ENCODE measurements at regions of chr4 and their contacts with region 1.

Region 1: DNA sequence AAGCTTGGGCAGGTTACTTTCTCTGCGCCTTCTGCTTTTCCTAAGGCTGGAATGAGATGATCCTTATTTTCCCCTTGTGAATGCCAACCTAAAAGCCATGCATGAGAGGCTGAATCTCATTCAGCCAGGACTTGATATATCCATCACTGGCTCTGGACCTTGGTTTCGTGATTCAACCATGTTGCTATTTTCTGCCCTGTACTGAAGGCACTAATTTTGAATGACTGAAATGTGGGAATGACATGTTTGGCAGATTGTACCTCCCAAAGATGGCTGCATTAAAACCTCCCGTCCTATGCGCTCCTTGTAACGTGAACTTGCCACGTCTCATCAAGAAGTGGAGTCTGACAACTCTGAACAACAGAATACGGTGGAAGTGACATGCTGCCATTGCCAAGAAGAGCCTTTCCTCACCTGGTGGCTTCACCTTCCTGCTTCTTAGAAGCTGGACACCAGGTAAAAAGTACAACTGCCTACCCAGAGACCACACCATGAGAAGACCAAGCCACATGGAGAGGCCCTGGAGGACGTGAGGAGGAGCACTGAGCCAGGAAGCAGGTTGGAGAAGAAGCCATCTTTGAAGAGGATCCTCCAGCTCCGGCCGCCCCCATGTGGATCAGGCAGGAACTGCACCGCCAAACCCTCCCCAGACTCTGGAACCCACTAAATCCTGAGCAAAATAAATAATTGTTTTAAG is 174.5 kb downstream of the NSUN7 start:
- DNase-seq: peak in 1 of 2 donors; percentile 89
- H3K4me3 ChIP-seq: no peak overlapping the region
- CTCF ChIP-seq: peak in 1 of 3 donors; percentile 41
- POLR2A ChIP-seq: no peak

Region 2: GRCh38 chr4:39668887-39669286 is 1255.4 kb before region 1 on chr4:
- intact Hi-C with region 1: no loop called
- DNase-seq: no peak
- H3K4me3 ChIP-seq: no peak overlapping the region
- CTCF ChIP-seq: no peak
- POLR2A ChIP-seq: no peak

Region 3: DNA sequence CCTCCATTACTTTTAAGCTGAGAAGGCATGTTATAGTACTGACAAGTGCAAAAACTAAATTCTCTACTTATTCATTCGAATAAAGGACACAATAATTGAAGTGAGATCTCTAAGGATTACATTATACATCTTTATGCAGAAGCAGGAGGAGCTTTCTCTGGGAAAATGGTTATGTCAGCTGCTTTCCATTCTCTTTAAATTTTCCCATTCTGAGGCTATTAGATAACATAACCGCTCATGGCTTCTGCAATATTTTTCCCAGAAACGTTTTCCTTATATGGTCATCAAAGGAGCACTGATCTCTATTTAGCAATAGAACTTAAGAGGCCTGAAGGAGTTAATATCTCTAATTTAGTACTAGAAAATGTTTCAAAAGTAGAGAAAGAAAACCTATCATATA is 47.1 kb after region 1 on chr4:
- intact Hi-C with region 1: loop called (anchors 5 kb)
- DNase-seq: no peak
- H3K4me3 ChIP-seq: no peak overlapping the region
- CTCF ChIP-seq: no peak
- POLR2A ChIP-seq: no peak

Region 4: GRCh38 chr4:41214136-41214824 is 290.0 kb after region 1 on chr4 and contains the start of gene APBB2:
- intact Hi-C with region 1: loop called (anchors 5 kb)
- DNase-seq: peak; percentile 92 to 98
- H3K4me3 ChIP-seq: peak within 1 kb of the TSS; percentile 86
- CTCF ChIP-seq: no peak
- POLR2A ChIP-seq: no peak
- total RNA-seq, gene APBB2: 24.0 to 49.2 (median 43.3) TPM

Measured in lower leg skin (tissue), 4 donors.